ENCODE measurements at regions of chr3 and their contacts with region 1.

Region 1: GRCh38 chr3:197398286-197398878 is 100.0 kb upstream of the DLG1 start:
- DNase-seq: peak; percentile 59
- ATAC-seq: peak; percentile 81
- H3K4me3 Mint-ChIP-seq: no peak overlapping the region
- H3K27ac Mint-ChIP-seq: no peak overlapping the region
- H3K4me1 Mint-ChIP-seq: peaks cover 21% of the 10 kb centered on the region
- H3K27me3 Mint-ChIP-seq: no peaks in the 10 kb centered on the region

Region 2: DNA sequence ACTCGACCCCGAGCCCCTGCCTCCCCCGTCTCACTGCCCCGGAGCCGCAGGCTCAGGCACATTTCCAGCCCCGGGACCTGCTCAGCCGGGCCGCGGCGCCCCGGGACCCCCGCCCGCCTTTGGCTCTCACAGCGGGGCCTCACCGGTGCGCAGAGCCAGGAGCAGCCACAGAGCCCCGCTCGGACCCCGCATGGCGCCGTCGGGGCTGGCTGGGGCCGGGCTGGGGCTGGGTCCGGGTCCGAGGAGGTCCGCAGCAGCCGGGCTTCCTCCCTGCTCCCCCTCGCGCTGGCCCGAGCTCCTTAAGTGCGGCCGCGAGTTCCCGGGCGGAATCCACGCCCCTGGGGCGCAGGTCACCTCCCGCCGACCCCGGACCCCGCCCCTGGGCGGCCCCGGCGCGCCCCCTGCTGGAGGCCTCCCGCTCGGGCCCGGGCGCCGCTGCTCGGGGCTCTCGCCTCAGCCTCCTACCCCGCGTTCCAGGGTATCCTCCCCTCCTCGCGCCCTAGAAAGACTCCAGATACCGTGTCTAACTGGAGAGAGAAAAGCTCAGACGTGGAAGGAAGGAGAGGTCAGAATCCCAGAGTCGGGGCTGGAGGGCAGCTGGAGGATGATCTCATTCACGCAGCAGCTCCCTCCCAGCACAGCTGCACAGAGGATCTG is 368.7 kb before region 1 on chr3 and contains the start of gene MELTF:
- CTCF ChIA-PET with region 1: no interaction called
- POLR2A ChIA-PET with region 1: no interaction called
- intact Hi-C with region 1: no loop called
- DNase-seq: peak; percentile 84
- ATAC-seq: peak; percentile 84
- H3K4me3 Mint-ChIP-seq: peak within 1 kb of the TSS; percentile 72
- H3K27ac Mint-ChIP-seq: no peak within 1 kb of the TSS
- H3K4me1 Mint-ChIP-seq: peaks cover 18% of the 10 kb centered on the region
- H3K27me3 Mint-ChIP-seq: no peaks in the 10 kb centered on the region
- total RNA-seq, gene MELTF: 3.7 to 4.3 TPM

Region 3: DNA sequence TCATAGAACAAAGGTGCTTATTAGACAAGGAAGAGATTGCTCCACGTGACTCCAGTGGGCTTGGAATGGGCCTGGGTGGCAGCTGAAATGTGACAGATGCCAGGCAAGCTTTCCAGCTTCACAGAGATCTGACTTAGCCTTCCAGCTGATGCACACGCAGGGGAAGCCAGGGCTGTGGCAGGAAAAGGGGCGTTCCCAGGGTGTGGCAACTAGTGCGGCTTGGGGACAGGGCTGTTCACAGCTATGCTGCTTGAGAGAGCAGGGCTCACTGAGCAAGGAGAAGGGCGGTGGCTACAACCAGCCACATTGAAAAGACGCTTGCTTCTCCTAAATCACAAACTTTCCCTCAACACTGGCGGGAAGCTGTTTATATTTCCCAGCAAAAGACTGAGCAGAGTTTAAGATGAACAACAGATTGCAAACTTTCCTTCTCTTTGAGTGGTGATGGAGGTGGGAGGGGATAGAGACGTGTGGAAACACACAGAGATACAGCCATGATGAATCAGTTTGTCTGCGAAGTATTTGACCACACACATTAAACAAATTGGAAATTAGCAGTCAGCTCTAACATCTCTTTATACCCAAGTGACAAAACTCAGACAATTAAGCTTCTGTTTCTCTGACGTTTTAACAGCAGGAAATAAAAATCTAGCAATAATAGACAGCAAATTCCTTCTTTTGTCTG is 29.9 kb after region 1 on chr3:
- CTCF ChIA-PET with region 1: interaction called, 3 read pairs
- POLR2A ChIA-PET with region 1: no interaction called
- intact Hi-C with region 1: loop called in 1 of 2 experiments (anchors 2 kb)
- DNase-seq: peak; percentile 83
- ATAC-seq: peak; percentile 97
- H3K4me3 Mint-ChIP-seq: peak overlapping the region; percentile 38
- H3K27ac Mint-ChIP-seq: peak overlapping the region; percentile 49
- H3K4me1 Mint-ChIP-seq: peaks cover 21% of the 10 kb centered on the region
- H3K27me3 Mint-ChIP-seq: peaks cover 13% of the 10 kb centered on the region

Region 4: GRCh38 chr3:197599089-197599765 is 200.8 kb after region 1 on chr3:
- CTCF ChIA-PET with region 1: no interaction called
- POLR2A ChIA-PET with region 1: no interaction called
- intact Hi-C with region 1: no loop called
- DNase-seq: peak; percentile 86
- ATAC-seq: peak; percentile 99
- H3K4me3 Mint-ChIP-seq: no peak overlapping the region
- H3K27ac Mint-ChIP-seq: no peak overlapping the region
- H3K4me1 Mint-ChIP-seq: no peaks in the 10 kb centered on the region
- H3K27me3 Mint-ChIP-seq: no peaks in the 10 kb centered on the region